ENCODE measurements at regions of chr17 and their contacts with region 1.

Region 1: GRCh38 chr17:64938925-64939474 is 19.7 kb upstream of the LRRC37A3 start:
- DNase-seq: peak; percentile 71 to 88 (median 78)
- ATAC-seq: peak; percentile 99
- H3K4me3 ChIP-seq: no peak overlapping the region
- H3K27ac ChIP-seq: peak overlapping the region; percentile 42; the same call in 2 of the 3 replicates
- H3K4me1 ChIP-seq: peaks cover 8 to 12% of the 10 kb centered on the region in 2 experiments; a peak in 4 of 5 replicates
- H3K27me3 ChIP-seq: no peaks in the 10 kb centered on the region
- CTCF ChIP-seq: peak; percentile 85 to 91 (median 88)
- EP300 ChIP-seq: no peak
- POLR2A ChIP-seq: no peak
- RAD21 ChIP-seq: peak; percentile 87 to 92

Region 2: GRCh38 chr17:64773836-64774761 is 164.9 kb before region 1 on chr17:
- CTCF ChIA-PET with region 1: no interaction called
- POLR2A ChIA-PET with region 1: no interaction called
- in situ Hi-C with region 1: no loop called
- intact Hi-C with region 1: loop called (anchors 5 kb)
- DNase-seq: peak; percentile 71 to 81 (median 76)
- ATAC-seq: peak; percentile 96
- H3K4me3 ChIP-seq: peak overlapping the region; percentile 39
- H3K27ac ChIP-seq: no peak overlapping the region
- H3K4me1 ChIP-seq: peaks cover 0 to 22% of the 10 kb centered on the region in 2 experiments; a peak in 2 of 5 replicates
- H3K27me3 ChIP-seq: no peaks in the 10 kb centered on the region
- CTCF ChIP-seq: peak; percentile 67 to 84 (median 74)
- EP300 ChIP-seq: no peak
- POLR2A ChIP-seq: 0 out of 2 replicates have a peak, but pooled peaks have one; percentile 42
- RAD21 ChIP-seq: peak; percentile 26 to 61; a peak in 2 of 4 replicates

Region 3: DNA sequence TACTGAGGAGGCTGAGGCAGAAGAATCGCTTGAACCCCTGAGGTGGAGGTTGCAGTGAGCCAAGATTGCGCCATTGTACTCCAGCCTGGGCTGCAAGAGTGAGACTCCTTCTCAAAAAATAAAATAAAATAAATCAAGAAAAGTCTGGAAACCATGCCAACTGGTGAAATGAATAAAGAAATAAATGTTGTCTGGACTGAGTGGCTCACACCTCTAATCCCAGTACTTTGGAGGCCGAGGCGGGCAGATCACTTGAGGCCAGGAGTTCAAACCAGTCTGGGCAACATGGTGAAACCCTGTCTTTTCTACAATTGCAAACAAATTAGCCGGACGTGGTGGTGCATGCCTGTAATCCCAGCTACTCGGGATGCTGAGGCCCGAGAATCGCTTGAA is 19.0 kb before region 1 on chr17:
- CTCF ChIA-PET with region 1: no interaction called
- POLR2A ChIA-PET with region 1: interaction called, 5 read pairs
- in situ Hi-C with region 1: no loop called
- intact Hi-C with region 1: loop called (anchors 2 kb)
- DNase-seq: no peak
- ATAC-seq: peak; percentile 5
- H3K4me3 ChIP-seq: peak overlapping the region; percentile 68
- H3K27ac ChIP-seq: peak overlapping the region; percentile 67; the same call in 2 of the 3 replicates
- H3K4me1 ChIP-seq: peaks cover 33 to 36% of the 10 kb centered on the region in 2 experiments
- H3K27me3 ChIP-seq: no peaks in the 10 kb centered on the region
- CTCF ChIP-seq: no peak
- EP300 ChIP-seq: no peak
- POLR2A ChIP-seq: no peak
- RAD21 ChIP-seq: no peak

Region 4: DNA sequence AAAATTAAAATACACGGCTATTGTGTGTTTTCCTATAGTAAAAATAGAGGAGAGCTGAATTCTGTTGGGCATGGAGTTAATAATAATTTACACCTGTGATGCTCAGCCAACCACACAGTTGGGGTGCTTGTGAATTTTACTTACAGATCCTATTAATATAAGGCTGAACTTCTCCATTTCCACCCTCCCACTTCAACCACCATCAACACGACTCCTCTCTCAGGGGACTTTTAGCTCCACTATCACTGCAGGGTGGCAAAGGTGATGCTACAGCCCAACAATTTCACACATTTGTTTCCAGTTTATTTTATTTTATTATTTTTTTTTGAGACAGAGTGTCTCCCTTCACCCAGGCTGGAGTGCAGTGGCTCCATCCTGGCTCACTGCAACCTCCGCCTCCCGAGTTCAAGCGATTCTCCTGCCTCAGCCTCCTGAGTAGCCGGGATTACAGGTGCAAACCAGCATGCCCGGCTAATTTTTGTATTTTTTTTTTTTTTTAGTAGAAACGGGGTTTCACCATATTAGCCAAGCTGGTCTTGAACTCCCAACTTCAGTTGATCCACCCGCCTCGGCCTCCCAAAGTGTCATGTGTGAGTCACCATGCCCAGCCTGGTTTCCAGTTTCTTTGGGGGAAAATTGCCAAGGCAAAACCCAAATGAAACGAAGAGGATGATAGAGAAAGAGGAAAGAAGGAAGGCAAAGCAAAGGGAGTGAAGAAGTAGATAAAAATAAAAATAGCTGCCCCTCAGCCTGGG is 59.6 kb after region 1 on chr17:
- CTCF ChIA-PET with region 1: no interaction called
- POLR2A ChIA-PET with region 1: no interaction called
- in situ Hi-C with region 1: no loop called
- intact Hi-C with region 1: no loop called
- DNase-seq: no peak
- ATAC-seq: no peak
- H3K4me3 ChIP-seq: no peak overlapping the region
- H3K27ac ChIP-seq: no peak overlapping the region
- H3K4me1 ChIP-seq: peaks cover 0 to 3% of the 10 kb centered on the region in 2 experiments; a peak in 3 of 5 replicates
- H3K27me3 ChIP-seq: no peaks in the 10 kb centered on the region; a peak in 3 of 5 replicates
- CTCF ChIP-seq: no peak
- EP300 ChIP-seq: no peak
- POLR2A ChIP-seq: no peak
- RAD21 ChIP-seq: no peak

Region 5: DNA sequence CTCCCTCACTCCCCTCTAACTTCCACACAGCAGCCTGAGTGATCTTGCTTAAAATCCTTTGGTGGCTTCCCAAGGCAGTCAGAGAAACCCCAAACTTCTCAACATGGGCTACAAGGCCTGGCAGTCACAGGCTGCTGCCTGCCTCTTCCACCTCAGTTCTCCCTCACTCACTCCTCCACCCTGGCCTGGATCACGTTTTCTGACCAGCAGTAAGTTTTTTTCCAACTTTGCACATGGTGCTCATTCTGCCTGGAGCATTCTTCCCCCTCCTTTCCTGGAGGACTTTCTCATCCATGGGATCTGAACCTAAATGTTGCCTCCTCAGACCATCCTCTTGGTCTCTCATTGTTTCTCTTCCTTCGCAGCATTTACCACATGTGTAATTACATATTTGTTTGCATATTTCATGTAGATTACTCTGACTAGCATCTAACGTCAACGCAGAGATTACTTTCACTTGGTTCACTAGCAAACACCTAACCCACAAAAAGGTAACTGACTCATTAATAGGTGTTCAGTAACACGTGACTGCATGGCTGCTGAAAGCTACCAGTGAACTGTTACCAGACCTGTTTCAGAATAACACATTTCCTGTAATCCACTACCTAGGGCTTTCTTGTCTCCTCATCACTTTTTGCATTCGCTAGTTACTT is 100.5 kb after region 1 on chr17:
- CTCF ChIA-PET with region 1: no interaction called
- POLR2A ChIA-PET with region 1: no interaction called
- in situ Hi-C with region 1: no loop called
- intact Hi-C with region 1: no loop called
- DNase-seq: no peak
- ATAC-seq: peak; percentile 21
- H3K4me3 ChIP-seq: no peak overlapping the region
- H3K27ac ChIP-seq: no peak overlapping the region
- H3K4me1 ChIP-seq: peaks cover 8 to 17% of the 10 kb centered on the region in 2 experiments; a peak in 4 of 5 replicates
- H3K27me3 ChIP-seq: no peaks in the 10 kb centered on the region
- CTCF ChIP-seq: no peak
- EP300 ChIP-seq: no peak
- POLR2A ChIP-seq: no peak
- RAD21 ChIP-seq: no peak

Region 6: GRCh38 chr17:65219124-65219523 is 280.1 kb after region 1 on chr17:
- CTCF ChIA-PET with region 1: no interaction called
- POLR2A ChIA-PET with region 1: no interaction called
- in situ Hi-C with region 1: no loop called
- intact Hi-C with region 1: no loop called
- DNase-seq: no peak
- ATAC-seq: peak; percentile 54; the same call in 1 of the 3 replicates
- H3K4me3 ChIP-seq: no peak overlapping the region
- H3K27ac ChIP-seq: no peak overlapping the region
- H3K4me1 ChIP-seq: no peaks in the 10 kb centered on the region
- H3K27me3 ChIP-seq: peaks cover 21 to 50% of the 10 kb centered on the region in 2 experiments
- CTCF ChIP-seq: peak; percentile 32 to 46 (median 45); a peak in 4 of 6 replicates
- EP300 ChIP-seq: no peak
- POLR2A ChIP-seq: no peak
- RAD21 ChIP-seq: no peak; a peak in 1 of 4 replicates

Region 7: DNA sequence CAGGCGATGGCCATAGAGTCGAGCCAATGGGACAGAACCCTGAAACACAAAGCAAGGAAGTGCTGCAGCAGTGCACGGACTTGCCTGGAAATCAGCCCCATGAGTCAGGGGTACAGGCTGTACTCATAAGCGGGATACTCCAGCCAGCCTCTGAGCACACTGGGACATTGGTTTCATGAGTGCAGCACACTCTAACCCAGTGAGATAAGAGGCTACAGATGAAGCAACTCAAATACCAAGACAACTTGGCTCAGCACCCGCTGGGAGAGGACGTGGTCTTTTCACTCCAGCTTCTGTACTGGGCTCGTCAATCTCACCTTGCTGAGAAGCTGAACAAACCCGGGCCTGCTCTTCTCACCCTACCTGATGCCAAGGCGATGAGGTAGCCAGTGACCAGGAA is 524.2 kb after region 1 on chr17:
- CTCF ChIA-PET with region 1: no interaction called
- POLR2A ChIA-PET with region 1: no interaction called
- in situ Hi-C with region 1: no loop called
- intact Hi-C with region 1: no loop called
- DNase-seq: no peak
- ATAC-seq: no peak
- H3K4me3 ChIP-seq: no peak overlapping the region
- H3K27ac ChIP-seq: no peak overlapping the region
- H3K4me1 ChIP-seq: no peaks in the 10 kb centered on the region
- H3K27me3 ChIP-seq: peaks cover 9 to 29% of the 10 kb centered on the region in 2 experiments
- CTCF ChIP-seq: no peak
- EP300 ChIP-seq: no peak
- POLR2A ChIP-seq: no peak
- RAD21 ChIP-seq: no peak